ENCODE measurements at regions of chr11 and their contacts with region 1.

Region 1: GRCh38 chr11:100575870-100576705 is 111.0 kb upstream of the ARHGAP42 start:
- DNase-seq: peak; percentile 20
- ATAC-seq: peak; percentile 87
- H3K4me3 ChIP-seq: no peak overlapping the region
- H3K27ac ChIP-seq: no peak overlapping the region
- H3K4me1 ChIP-seq: no peaks in the 10 kb centered on the region
- H3K27me3 ChIP-seq: no peaks in the 10 kb centered on the region
- CTCF ChIP-seq: peak; percentile 79; the same call in 1 of the 2 replicates

Region 2: GRCh38 chr11:99759787-99760186 is 816.3 kb before region 1 on chr11:
- CTCF ChIA-PET with region 1: no interaction called
- POLR2A ChIA-PET with region 1: no interaction called
- in situ Hi-C with region 1: no loop called
- intact Hi-C with region 1: loop called (anchors 10 kb)
- DNase-seq: no peak
- ATAC-seq: no peak
- H3K4me3 ChIP-seq: no peak overlapping the region
- H3K27ac ChIP-seq: no peak overlapping the region
- H3K4me1 ChIP-seq: no peaks in the 10 kb centered on the region
- H3K27me3 ChIP-seq: no peaks in the 10 kb centered on the region
- CTCF ChIP-seq: no peak

Region 3: DNA sequence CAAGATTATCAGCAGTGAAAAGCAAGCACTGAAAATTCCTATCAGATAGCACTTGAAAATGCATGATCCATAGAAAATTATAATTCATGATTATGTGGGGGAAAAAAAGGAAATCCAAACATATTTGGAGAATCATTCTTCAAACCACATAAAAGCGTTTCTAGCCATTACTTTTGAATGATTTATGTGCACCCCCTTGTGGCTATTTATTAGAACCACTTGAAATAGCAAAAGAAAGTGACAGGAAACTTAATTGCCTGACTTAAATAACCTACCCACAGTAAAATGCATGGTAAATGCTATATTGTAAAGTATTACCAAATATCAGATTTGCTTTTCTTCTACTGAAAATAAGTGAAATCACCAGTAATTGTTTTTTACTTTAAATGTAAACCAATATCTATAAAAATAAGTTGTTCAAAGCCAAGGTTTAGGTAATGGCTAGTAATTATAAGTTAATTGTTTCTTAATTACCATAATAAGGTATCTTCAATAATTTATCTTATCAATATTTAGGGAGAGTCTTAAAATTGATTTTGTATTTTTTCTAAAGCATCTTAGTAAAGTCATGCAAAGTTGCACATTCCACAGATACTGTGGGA is 279.5 kb after region 1 on chr11:
- CTCF ChIA-PET with region 1: interaction called, 7 read pairs
- POLR2A ChIA-PET with region 1: no interaction called
- in situ Hi-C with region 1: no loop called
- intact Hi-C with region 1: loop called (anchors 1 kb)
- DNase-seq: no peak
- ATAC-seq: no peak
- H3K4me3 ChIP-seq: no peak overlapping the region
- H3K27ac ChIP-seq: no peak overlapping the region
- H3K4me1 ChIP-seq: no peaks in the 10 kb centered on the region; the same call in none of the 2 replicates
- H3K27me3 ChIP-seq: no peaks in the 10 kb centered on the region
- CTCF ChIP-seq: peak; percentile 69; the same call in 1 of the 2 replicates

Region 4: DNA sequence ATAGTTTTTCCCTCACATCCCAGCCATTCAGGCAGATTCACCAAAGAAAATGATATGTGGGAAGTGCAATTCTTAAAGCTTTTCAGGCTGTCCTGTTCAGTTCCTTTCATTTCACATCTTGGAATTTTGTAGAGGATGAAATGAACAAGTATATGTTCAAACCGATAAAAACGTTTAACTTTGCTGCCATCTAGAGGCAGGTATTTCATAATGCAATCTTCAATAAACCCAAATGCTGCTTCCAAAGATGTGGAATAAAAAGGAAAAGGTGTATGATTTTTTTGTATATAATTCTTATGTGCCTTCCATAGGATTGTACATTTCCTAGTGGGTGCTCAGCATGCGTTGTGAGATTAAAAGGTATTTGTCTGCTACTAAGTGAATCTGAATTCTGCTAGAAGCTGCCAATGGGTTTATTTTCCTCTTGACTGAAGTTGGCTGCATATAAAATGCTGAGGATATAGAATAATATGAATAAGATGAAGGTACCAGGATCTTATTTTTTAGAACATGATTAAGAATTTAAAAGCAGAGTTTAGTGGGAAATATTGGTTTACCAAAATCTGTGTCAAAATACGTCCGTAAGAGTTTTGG is 354.2 kb after region 1 on chr11:
- CTCF ChIA-PET with region 1: interaction called, 5 read pairs
- POLR2A ChIA-PET with region 1: no interaction called
- in situ Hi-C with region 1: no loop called
- intact Hi-C with region 1: loop called (anchors 1 kb)
- DNase-seq: no peak
- ATAC-seq: peak; percentile 66; the same call in 1 of the 2 replicates
- H3K4me3 ChIP-seq: no peak overlapping the region
- H3K27ac ChIP-seq: no peak overlapping the region
- H3K4me1 ChIP-seq: peaks cover 14% of the 10 kb centered on the region
- H3K27me3 ChIP-seq: no peaks in the 10 kb centered on the region
- CTCF ChIP-seq: peak; percentile 73; the same call in 1 of the 2 replicates